Activated B cell treated with CpG ODN at 0.5 μM for 24 hours (primary cell): ENCODE measurements at regions of chr12 and their contacts with region 1.

Region 1: GRCh38 chr12:47079468-47079980 is at the starts of genes AMIGO2 and PCED1B:
- DNase-seq: no peak
- ATAC-seq: peak; percentile 47
- H3K4me3 Mint-ChIP-seq: peak within 1 kb of the TSS; percentile 99
- H3K27ac Mint-ChIP-seq: peak within 1 kb of the TSS; percentile 95
- H3K4me1 Mint-ChIP-seq: peaks cover 67% of the 10 kb centered on the region
- H3K27me3 Mint-ChIP-seq: no peaks in the 10 kb centered on the region
- CTCF ChIP-seq: no peak
- total RNA-seq, gene AMIGO2: 13.9 and 14.1 TPM in 2 replicates
- total RNA-seq, gene PCED1B: 60.9 and 65.4 TPM in 2 replicates

Region 2: GRCh38 chr12:46770501-46771183 is 308.9 kb before region 1 on chr12:
- CTCF ChIA-PET with region 1: no interaction called
- POLR2A ChIA-PET with region 1: no interaction called
- intact Hi-C with region 1: no loop called
- DNase-seq: no peak
- ATAC-seq: no peak
- H3K4me3 Mint-ChIP-seq: no peak overlapping the region
- H3K27ac Mint-ChIP-seq: no peak overlapping the region
- H3K4me1 Mint-ChIP-seq: no peaks in the 10 kb centered on the region
- H3K27me3 Mint-ChIP-seq: no peaks in the 10 kb centered on the region
- CTCF ChIP-seq: no peak

Region 3: GRCh38 chr12:47014474-47014873 is 65.0 kb before region 1 on chr12:
- CTCF ChIA-PET with region 1: no interaction called
- POLR2A ChIA-PET with region 1: no interaction called
- intact Hi-C with region 1: no loop called
- DNase-seq: no peak
- ATAC-seq: no peak
- H3K4me3 Mint-ChIP-seq: no peak overlapping the region
- H3K27ac Mint-ChIP-seq: no peak overlapping the region
- H3K4me1 Mint-ChIP-seq: no peaks in the 10 kb centered on the region
- H3K27me3 Mint-ChIP-seq: peaks cover 4% of the 10 kb centered on the region
- CTCF ChIP-seq: no peak

Region 4: GRCh38 chr12:47190271-47190750 is 110.8 kb after region 1 on chr12:
- CTCF ChIA-PET with region 1: no interaction called
- POLR2A ChIA-PET with region 1: interaction called, 8 read pairs
- intact Hi-C with region 1: loop called (anchors 2 kb)
- DNase-seq: no peak
- ATAC-seq: peak; percentile 25
- H3K4me3 Mint-ChIP-seq: peak overlapping the region; percentile 45
- H3K27ac Mint-ChIP-seq: peak overlapping the region; percentile 86
- H3K4me1 Mint-ChIP-seq: peaks cover 75% of the 10 kb centered on the region
- H3K27me3 Mint-ChIP-seq: no peaks in the 10 kb centered on the region
- CTCF ChIP-seq: no peak

Region 5: GRCh38 chr12:47216150-47216677 is 136.7 kb after region 1 on chr12:
- CTCF ChIA-PET with region 1: interaction called, 6 read pairs
- POLR2A ChIA-PET with region 1: interaction called, 39 read pairs
- intact Hi-C with region 1: loop called (anchors 1 kb)
- DNase-seq: peak; percentile 42
- ATAC-seq: peak; percentile 80
- H3K4me3 Mint-ChIP-seq: peak overlapping the region; percentile 88
- H3K27ac Mint-ChIP-seq: peak overlapping the region; percentile 96
- H3K4me1 Mint-ChIP-seq: peaks cover 77% of the 10 kb centered on the region
- H3K27me3 Mint-ChIP-seq: no peaks in the 10 kb centered on the region
- CTCF ChIP-seq: no peak

Region 6: GRCh38 chr12:47356129-47356700 is 276.7 kb after region 1 on chr12:
- CTCF ChIA-PET with region 1: interaction called, 11 read pairs
- POLR2A ChIA-PET with region 1: interaction called, 13 read pairs
- intact Hi-C with region 1: loop called (anchors 2 kb)
- DNase-seq: no peak
- ATAC-seq: peak; percentile 77
- H3K4me3 Mint-ChIP-seq: peak overlapping the region; percentile 51
- H3K27ac Mint-ChIP-seq: peak overlapping the region; percentile 97
- H3K4me1 Mint-ChIP-seq: peaks cover 85% of the 10 kb centered on the region
- H3K27me3 Mint-ChIP-seq: no peaks in the 10 kb centered on the region
- CTCF ChIP-seq: no peak

Region 7: GRCh38 chr12:47408171-47408871 is 328.8 kb after region 1 on chr12:
- CTCF ChIA-PET with region 1: interaction called, 7 read pairs
- POLR2A ChIA-PET with region 1: interaction called, 8 read pairs
- intact Hi-C with region 1: loop called (anchors 1 kb)
- DNase-seq: peak; percentile 46
- ATAC-seq: peak; percentile 97
- H3K4me3 Mint-ChIP-seq: no peak overlapping the region
- H3K27ac Mint-ChIP-seq: peak overlapping the region; percentile 63
- H3K4me1 Mint-ChIP-seq: peaks cover 28% of the 10 kb centered on the region
- H3K27me3 Mint-ChIP-seq: no peaks in the 10 kb centered on the region
- CTCF ChIP-seq: no peak